ENCODE measurements at regions of chr15 and their contacts with region 1.

Region 1: GRCh38 chr15:62066663-62067447 is at the start of gene C2CD4A:
- DNase-seq: peak; percentile 88
- ATAC-seq: peak; percentile 92
- H3K4me3 ChIP-seq: peak within 1 kb of the TSS; percentile 41 to 75 (median 48)
- H3K27ac ChIP-seq: no peak within 1 kb of the TSS
- H3K4me1 ChIP-seq: peaks cover 34% of the 10 kb centered on the region
- H3K27me3 ChIP-seq: peaks cover 0 to 3% of the 10 kb centered on the region in 2 experiments; a peak in 1 of 5 replicates
- CTCF ChIP-seq: peak; percentile 57
- EP300 ChIP-seq: peak; percentile 25 to 43; a peak in 1 of 4 replicates
- POLR2A ChIP-seq: peak in 1 of 2 experiments; percentile 72; a peak in 2 of 4 replicates
- RAD21 ChIP-seq: no peak
- total RNA-seq, gene C2CD4A: 0.17 and 0.20 TPM in 2 replicates

Region 2: GRCh38 chr15:62021991-62022600 is 44.8 kb before region 1 on chr15:
- CTCF ChIA-PET with region 1: no interaction called
- POLR2A ChIA-PET with region 1: no interaction called
- in situ Hi-C with region 1: no loop called
- intact Hi-C with region 1: loop called (anchors 1 kb)
- DNase-seq: peak; percentile 15
- ATAC-seq: peak; percentile 58; the same call in 2 of the 3 replicates
- H3K4me3 ChIP-seq: no peak overlapping the region
- H3K27ac ChIP-seq: no peak overlapping the region
- H3K4me1 ChIP-seq: no peaks in the 10 kb centered on the region
- H3K27me3 ChIP-seq: no peaks in the 10 kb centered on the region
- CTCF ChIP-seq: peak; percentile 19; the same call in 1 of the 2 replicates
- EP300 ChIP-seq: no peak
- POLR2A ChIP-seq: no peak
- RAD21 ChIP-seq: no peak

Region 3: GRCh38 chr15:62306851-62307504 is 240.1 kb after region 1 on chr15:
- CTCF ChIA-PET with region 1: no interaction called
- POLR2A ChIA-PET with region 1: no interaction called
- in situ Hi-C with region 1: no loop called
- intact Hi-C with region 1: loop called (anchors 5 kb)
- DNase-seq: peak; percentile 73
- ATAC-seq: peak; percentile 96
- H3K4me3 ChIP-seq: no peak overlapping the region
- H3K27ac ChIP-seq: no peak overlapping the region
- H3K4me1 ChIP-seq: no peaks in the 10 kb centered on the region
- H3K27me3 ChIP-seq: peaks cover 1 to 15% of the 10 kb centered on the region in 2 experiments; a peak in 3 of 5 replicates
- CTCF ChIP-seq: peak; percentile 79
- EP300 ChIP-seq: no peak
- POLR2A ChIP-seq: no peak
- RAD21 ChIP-seq: peak; percentile 69